PC-9 (cell line): ENCODE measurements at regions of chr15 and their contacts with region 1.

Region 1: GRCh38 chr15:40382580-40383456 is at the start of gene KNSTRN:
- DNase-seq: peak; percentile 78 to 87
- H3K4me3 ChIP-seq: peak within 1 kb of the TSS; percentile 76
- H3K27ac ChIP-seq: peak within 1 kb of the TSS; percentile 45
- H3K4me1 ChIP-seq: peaks cover 50% of the 10 kb centered on the region
- H3K27me3 ChIP-seq: no peaks in the 10 kb centered on the region
- CTCF ChIP-seq: no peak
- total RNA-seq, gene KNSTRN: 85.2 and 95.6 TPM in 2 replicates

Region 2: GRCh38 chr15:40398413-40398873 is 15.6 kb after region 1 on chr15:
- CTCF ChIA-PET with region 1: no interaction called
- POLR2A ChIA-PET with region 1: interaction called, 17 read pairs
- intact Hi-C with region 1: no loop called
- DNase-seq: no peak
- H3K4me3 ChIP-seq: no peak overlapping the region
- H3K27ac ChIP-seq: no peak overlapping the region
- H3K4me1 ChIP-seq: no peaks in the 10 kb centered on the region
- H3K27me3 ChIP-seq: no peaks in the 10 kb centered on the region
- CTCF ChIP-seq: no peak

Region 3: DNA sequence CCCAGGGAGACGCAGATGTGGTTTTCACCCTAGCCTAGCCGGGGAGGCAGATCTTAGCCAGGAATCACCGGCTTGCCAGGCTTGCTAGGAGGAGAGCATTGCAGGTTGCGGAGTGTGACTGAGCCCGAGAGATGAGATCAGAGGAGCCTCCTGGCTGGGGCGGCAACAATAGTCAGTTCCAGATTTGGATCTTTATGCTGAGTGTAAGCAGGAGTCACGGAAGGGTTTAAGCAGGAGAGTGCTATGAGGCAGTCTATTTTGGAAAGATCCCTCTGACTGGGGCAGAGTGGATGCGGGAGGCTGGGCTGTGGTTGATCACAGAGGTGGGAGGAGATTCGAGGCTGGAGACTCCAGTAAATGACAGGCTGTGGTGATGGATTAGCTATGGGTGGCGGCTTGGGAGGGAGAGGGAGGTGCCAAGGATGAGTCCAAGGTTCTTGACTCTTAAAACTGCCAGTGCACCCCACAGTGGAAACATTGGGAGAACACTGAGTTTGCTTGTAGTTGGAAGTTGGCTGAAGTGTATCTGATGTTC is 47.5 kb after region 1 on chr15:
- CTCF ChIA-PET with region 1: no interaction called
- POLR2A ChIA-PET with region 1: no interaction called
- intact Hi-C with region 1: no loop called
- DNase-seq: no peak
- H3K4me3 ChIP-seq: no peak overlapping the region
- H3K27ac ChIP-seq: no peak overlapping the region
- H3K4me1 ChIP-seq: no peaks in the 10 kb centered on the region
- H3K27me3 ChIP-seq: no peaks in the 10 kb centered on the region
- CTCF ChIP-seq: no peak

Region 4: GRCh38 chr15:40452296-40453090 is 69.7 kb after region 1 on chr15:
- CTCF ChIA-PET with region 1: no interaction called
- POLR2A ChIA-PET with region 1: no interaction called
- intact Hi-C with region 1: no loop called
- DNase-seq: no peak
- H3K4me3 ChIP-seq: no peak overlapping the region
- H3K27ac ChIP-seq: no peak overlapping the region
- H3K4me1 ChIP-seq: peaks cover 27% of the 10 kb centered on the region
- H3K27me3 ChIP-seq: no peaks in the 10 kb centered on the region
- CTCF ChIP-seq: no peak

Region 5: DNA sequence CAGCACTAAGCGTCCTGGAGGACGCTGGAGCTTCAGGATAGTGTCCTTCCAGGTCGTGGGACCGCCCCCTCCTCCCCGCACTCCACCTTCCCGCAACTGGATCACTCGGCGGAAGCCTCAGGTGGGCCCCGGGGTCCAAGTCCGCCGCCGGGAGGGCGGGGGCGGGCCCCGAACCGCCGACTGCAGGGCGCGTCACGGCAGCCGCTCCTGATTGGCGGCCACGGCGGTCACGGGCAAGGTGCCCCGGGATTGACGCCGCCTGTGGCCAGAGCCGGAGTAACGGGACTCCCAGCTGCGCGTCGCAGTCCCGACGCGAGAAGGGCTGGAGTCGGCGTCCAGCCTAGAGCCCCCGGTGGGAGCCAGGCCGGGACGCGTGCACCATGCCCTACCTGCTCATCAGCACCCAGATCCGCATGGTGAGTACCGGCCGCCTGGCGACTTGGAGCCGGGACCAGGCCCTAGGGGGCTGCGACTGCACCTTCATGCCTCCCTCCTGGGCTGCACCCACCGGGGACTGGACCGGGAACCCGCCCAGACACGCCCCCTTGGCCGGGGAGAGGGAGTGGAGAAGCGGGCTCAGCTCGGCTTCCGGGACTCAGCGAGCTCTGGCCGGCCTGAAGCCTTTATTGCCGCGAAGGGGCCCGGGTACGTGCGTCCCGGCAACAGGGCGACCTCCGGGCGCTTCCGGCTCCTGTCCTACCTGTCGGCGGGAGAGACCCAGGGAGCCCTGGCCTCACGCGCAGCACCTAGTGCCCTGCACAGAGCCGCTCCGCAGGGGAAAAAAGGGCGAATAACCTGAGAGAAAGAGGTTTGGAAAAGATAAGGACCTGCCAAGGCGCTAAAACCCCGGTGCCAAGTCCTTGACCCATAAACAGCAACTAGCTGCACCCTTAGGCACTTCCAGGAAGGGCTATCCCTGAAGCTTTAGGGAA is 381.2 kb after region 1 on chr15 and contains the start of gene GCHFR:
- CTCF ChIA-PET with region 1: no interaction called
- POLR2A ChIA-PET with region 1: no interaction called
- intact Hi-C with region 1: no loop called
- DNase-seq: no peak
- H3K4me3 ChIP-seq: no peak within 1 kb of the TSS
- H3K27ac ChIP-seq: no peak within 1 kb of the TSS
- H3K4me1 ChIP-seq: peaks cover 37% of the 10 kb centered on the region
- H3K27me3 ChIP-seq: no peaks in the 10 kb centered on the region
- CTCF ChIP-seq: no peak
- total RNA-seq, gene GCHFR: 1.2 and 1.5 TPM in 2 replicates